B cell (primary cell): ENCODE measurements at regions of chr14 and their contacts with region 1.

Region 1: GRCh38 chr14:104752735-104753531 is at the start of gene SIVA1:
- DNase-seq: peak; percentile 100
- ATAC-seq: peak; percentile 88
- H3K4me3 ChIP-seq: peak within 1 kb of the TSS; percentile 38 to 98 (median 91)
- H3K4me3 Mint-ChIP-seq: peak within 1 kb of the TSS; percentile 91
- H3K27ac ChIP-seq: peak within 1 kb of the TSS; percentile 80 to 90
- H3K27ac Mint-ChIP-seq: peak within 1 kb of the TSS; percentile 95
- H3K4me1 ChIP-seq: peaks cover 18 to 24% of the 10 kb centered on the region in 2 donors
- H3K4me1 Mint-ChIP-seq: peaks cover 33% of the 10 kb centered on the region
- H3K27me3 ChIP-seq: no peaks in the 10 kb centered on the region
- H3K27me3 Mint-ChIP-seq: no peaks in the 10 kb centered on the region
- CTCF ChIP-seq: no peak
- total RNA-seq, gene SIVA1: 50.7 and 52.5 TPM in 2 replicates

Region 2: GRCh38 chr14:104657101-104657524 is 95.8 kb before region 1 on chr14:
- CTCF ChIA-PET with region 1: interaction called, 4 read pairs
- POLR2A ChIA-PET with region 1: interaction called, 3 read pairs
- intact Hi-C with region 1: loop called (anchors 2 kb)
- DNase-seq: peak; percentile 94
- ATAC-seq: peak; percentile 62
- H3K4me3 ChIP-seq: peak overlapping the region in 3 of 5 experiments; percentile 25 to 55 (median 32)
- H3K4me3 Mint-ChIP-seq: peak overlapping the region; percentile 84
- H3K27ac ChIP-seq: peak overlapping the region; percentile 98 to 100
- H3K27ac Mint-ChIP-seq: peak overlapping the region; percentile 99
- H3K4me1 ChIP-seq: peaks cover 65 to 74% of the 10 kb centered on the region in 2 donors
- H3K4me1 Mint-ChIP-seq: peaks cover 82% of the 10 kb centered on the region
- H3K27me3 ChIP-seq: no peaks in the 10 kb centered on the region
- H3K27me3 Mint-ChIP-seq: no peaks in the 10 kb centered on the region
- CTCF ChIP-seq: no peak

Region 3: DNA sequence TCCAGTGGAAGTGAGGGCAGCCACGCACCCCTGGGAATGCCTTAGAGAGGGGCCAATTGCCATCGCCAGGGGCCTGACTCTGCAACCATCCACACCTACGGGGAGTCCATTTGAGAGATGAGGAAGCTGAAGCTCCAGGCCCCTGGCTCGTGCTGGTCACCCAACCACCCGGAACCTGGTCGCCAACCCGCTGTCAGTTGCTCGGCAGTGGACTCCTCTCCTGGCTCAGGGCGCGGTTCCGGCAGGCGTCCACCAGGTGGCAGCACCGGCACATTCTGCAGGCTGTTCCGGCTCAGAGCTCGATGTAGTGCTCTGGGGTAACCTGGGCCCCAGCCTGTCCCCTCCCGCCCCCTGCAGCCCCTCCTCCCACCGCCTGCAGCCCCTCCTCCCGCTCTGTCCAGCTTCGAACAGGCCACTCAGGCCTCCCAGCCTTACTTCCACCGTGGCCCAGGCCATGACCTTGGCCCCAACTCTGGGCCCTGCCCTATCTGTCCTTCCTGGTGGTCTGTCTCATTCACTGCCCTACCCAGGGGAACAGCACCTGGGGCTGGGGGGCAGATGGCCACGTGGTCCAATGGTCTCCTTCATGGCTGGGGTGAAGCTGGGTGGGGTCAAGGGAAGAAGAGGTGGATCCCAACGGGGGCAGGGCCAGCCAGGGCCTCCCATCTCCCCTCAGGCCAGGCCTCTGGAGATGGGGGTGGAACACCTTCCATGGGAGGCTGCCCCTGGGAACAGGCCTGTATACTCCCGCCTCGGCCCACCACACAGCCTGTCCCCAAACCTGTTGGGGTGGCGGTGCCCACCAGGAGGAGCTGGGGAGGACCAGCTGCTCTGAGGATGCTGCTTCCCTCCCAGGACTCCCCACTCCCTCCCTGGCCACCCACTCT is 15.7 kb after region 1 on chr14:
- CTCF ChIA-PET with region 1: interaction called, 13 read pairs
- POLR2A ChIA-PET with region 1: interaction called, 3 read pairs
- intact Hi-C with region 1: loop called (anchors 1 kb)
- DNase-seq: peak; percentile 88
- ATAC-seq: peak; percentile 95
- H3K4me3 ChIP-seq: no peak overlapping the region
- H3K4me3 Mint-ChIP-seq: no peak overlapping the region
- H3K27ac ChIP-seq: no peak overlapping the region
- H3K27ac Mint-ChIP-seq: no peak overlapping the region
- H3K4me1 ChIP-seq: peaks cover 0 to 8% of the 10 kb centered on the region in 2 donors
- H3K4me1 Mint-ChIP-seq: peaks cover 8% of the 10 kb centered on the region
- H3K27me3 ChIP-seq: no peaks in the 10 kb centered on the region
- H3K27me3 Mint-ChIP-seq: no peaks in the 10 kb centered on the region
- CTCF ChIP-seq: peak; percentile 95

Region 4: DNA sequence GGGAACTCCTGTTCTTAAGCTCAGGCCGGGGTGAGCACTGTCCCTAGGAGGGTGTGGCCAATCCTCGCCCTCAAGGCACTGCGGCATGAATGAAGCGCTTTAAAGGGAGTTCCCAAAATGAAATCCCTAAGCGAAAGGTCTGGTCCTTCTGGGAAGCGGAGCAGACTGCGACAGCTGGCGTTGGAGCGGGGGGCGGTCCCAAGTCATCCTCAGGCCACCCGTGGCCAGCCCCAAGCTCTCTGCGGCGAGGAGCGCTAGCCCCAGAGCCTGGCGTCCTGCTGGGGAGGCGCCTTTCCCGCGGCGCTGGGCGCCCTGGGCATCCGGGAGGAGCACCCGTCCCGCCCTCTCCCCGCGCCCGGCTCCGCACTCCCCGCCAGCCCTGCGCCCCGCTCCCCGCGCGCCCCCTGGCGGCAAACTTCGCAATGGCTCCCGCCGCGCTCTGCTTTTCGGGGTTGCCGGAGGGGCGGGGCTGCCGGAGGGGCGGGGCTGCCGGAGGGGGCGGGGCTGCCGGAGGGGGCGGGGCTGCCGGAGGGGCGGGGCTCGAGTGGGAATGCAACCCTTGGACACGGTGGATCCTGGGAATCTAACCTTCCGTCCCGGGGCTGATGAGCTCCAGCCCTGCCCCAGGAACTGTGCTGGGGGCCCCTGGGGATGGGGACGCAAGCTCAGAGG is 73.4 kb after region 1 on chr14:
- CTCF ChIA-PET with region 1: interaction called, 7 read pairs
- POLR2A ChIA-PET with region 1: no interaction called
- intact Hi-C with region 1: loop called (anchors 1 kb)
- DNase-seq: peak; percentile 91
- ATAC-seq: peak; percentile 88
- H3K4me3 ChIP-seq: peak overlapping the region; percentile 39 to 78 (median 64)
- H3K4me3 Mint-ChIP-seq: peak overlapping the region; percentile 85
- H3K27ac ChIP-seq: no peak overlapping the region
- H3K27ac Mint-ChIP-seq: peak overlapping the region; percentile 46
- H3K4me1 ChIP-seq: peaks cover 19 to 21% of the 10 kb centered on the region in 2 donors
- H3K4me1 Mint-ChIP-seq: peaks cover 29% of the 10 kb centered on the region
- H3K27me3 ChIP-seq: peaks cover 0 to 21% (median 10%) of the 10 kb centered on the region in 4 experiments
- H3K27me3 Mint-ChIP-seq: peaks cover 10% of the 10 kb centered on the region
- CTCF ChIP-seq: peak; percentile 78

Region 5: GRCh38 chr14:104898870-104899510 is 146.1 kb after region 1 on chr14:
- CTCF ChIA-PET with region 1: no interaction called
- POLR2A ChIA-PET with region 1: no interaction called
- intact Hi-C with region 1: no loop called
- DNase-seq: no peak
- ATAC-seq: no peak
- H3K4me3 ChIP-seq: no peak overlapping the region
- H3K4me3 Mint-ChIP-seq: no peak overlapping the region
- H3K27ac ChIP-seq: no peak overlapping the region
- H3K27ac Mint-ChIP-seq: no peak overlapping the region
- H3K4me1 ChIP-seq: peaks cover 0 to 5% of the 10 kb centered on the region in 2 donors
- H3K4me1 Mint-ChIP-seq: peaks cover 4% of the 10 kb centered on the region
- H3K27me3 ChIP-seq: peaks cover 0 to 4% (median 0%) of the 10 kb centered on the region in 4 experiments
- H3K27me3 Mint-ChIP-seq: peaks cover 13% of the 10 kb centered on the region
- CTCF ChIP-seq: no peak

Region 6: DNA sequence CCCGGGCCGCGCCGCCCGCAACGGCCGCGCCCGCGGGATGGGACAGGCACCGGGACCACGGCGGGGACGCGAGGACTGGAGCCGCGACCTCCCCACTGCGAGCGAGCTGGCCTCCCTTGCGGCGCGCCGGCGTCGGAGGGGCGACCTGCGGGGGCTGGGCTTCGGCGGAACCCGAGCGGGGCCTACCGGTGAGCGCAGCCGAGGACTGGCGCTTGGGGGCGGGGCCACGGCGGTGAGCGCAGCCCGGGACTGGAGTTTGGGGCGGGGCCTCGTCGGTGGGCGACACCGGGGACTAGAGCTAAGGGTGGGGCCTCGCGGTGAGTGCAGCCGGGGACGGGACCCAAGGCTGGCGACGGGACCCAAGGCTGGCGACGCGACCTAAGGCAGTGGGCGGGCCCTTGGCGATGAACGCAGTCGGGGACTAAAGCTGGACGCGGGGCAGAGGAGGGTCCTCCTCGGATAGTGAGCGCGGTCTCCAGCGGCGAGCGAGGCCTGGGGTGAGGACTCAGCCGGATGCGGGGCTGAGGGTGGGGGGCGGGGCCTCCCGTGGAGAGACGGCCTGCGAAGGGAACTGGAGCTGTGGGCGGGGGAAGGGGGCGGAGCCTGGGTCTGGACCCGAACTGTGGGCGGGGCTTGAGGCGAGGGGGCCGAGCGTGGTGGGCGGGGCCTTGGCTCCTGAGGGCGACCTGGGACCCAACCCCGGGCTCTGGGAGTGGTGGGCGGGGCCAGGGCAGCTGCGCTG is 548.0 kb after region 1 on chr14 and contains the start of gene BRF1:
- CTCF ChIA-PET with region 1: no interaction called
- POLR2A ChIA-PET with region 1: no interaction called
- intact Hi-C with region 1: loop called (anchors 5 kb)
- DNase-seq: peak; percentile 99
- ATAC-seq: peak; percentile 85
- H3K4me3 ChIP-seq: peak within 1 kb of the TSS; percentile 55 to 78 (median 67)
- H3K4me3 Mint-ChIP-seq: peak within 1 kb of the TSS; percentile 92
- H3K27ac ChIP-seq: peak within 1 kb of the TSS; percentile 82 to 85
- H3K27ac Mint-ChIP-seq: peak within 1 kb of the TSS; percentile 96
- H3K4me1 ChIP-seq: peaks cover 15 to 22% of the 10 kb centered on the region in 2 donors
- H3K4me1 Mint-ChIP-seq: peaks cover 20% of the 10 kb centered on the region
- H3K27me3 ChIP-seq: no peaks in the 10 kb centered on the region
- H3K27me3 Mint-ChIP-seq: no peaks in the 10 kb centered on the region
- CTCF ChIP-seq: no peak
- total RNA-seq, gene BRF1: 55.8 and 61.5 TPM in 2 replicates